Breast epithelium (tissue), 4 donors: ENCODE measurements at regions of chr1 and their contacts with region 1.

Region 1: DNA sequence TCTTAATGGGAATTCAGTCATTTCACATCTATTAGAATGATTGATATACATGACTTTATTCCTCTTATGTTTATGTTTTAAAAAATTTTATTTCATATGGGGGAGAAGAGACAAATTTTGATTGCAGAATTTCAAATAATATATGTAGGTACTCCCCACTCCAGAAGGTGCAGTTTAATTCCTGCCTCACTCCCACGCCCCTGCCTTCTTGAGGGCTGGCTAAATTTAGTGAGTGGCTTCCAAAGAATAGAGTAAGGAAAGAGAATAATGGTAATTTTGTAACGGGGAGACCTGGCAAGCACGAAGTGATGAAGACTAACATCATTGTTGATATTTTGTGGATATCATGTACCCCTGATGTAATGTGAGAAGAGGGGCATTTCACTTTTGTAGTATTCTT is 94.7 kb upstream of the FAM78B start:
- DNase-seq: no peak
- H3K4me3 ChIP-seq: no peak overlapping the region
- H3K27ac ChIP-seq: no peak overlapping the region
- H3K4me1 ChIP-seq: no peaks in the 10 kb centered on the region
- H3K27me3 ChIP-seq: no peaks in the 10 kb centered on the region
- CTCF ChIP-seq: no peak
- POLR2A ChIP-seq: no peak

Region 2: DNA sequence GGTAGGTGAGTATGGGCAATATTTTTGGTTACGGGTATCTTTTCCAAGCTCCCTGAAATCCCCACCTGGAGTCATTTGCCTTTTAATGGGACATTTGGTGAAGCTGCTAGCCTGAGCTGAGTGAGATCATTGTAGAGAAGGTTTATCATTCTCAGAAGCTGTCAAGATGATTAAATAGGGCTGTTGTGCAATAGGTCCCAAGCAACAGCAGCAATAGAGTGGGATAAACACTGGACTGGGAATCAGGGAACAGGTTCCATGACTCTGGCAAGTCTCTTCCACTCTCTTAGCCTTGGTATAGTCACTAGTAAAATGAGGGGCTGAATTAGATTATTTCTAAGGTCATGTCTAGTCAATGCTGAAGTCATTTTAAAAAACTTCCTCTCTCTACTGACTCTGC is 64.4 kb before region 1 on chr1:
- intact Hi-C with region 1: no loop called
- DNase-seq: no peak
- H3K4me3 ChIP-seq: no peak overlapping the region
- H3K27ac ChIP-seq: no peak overlapping the region
- H3K4me1 ChIP-seq: no peaks in the 10 kb centered on the region
- H3K27me3 ChIP-seq: no peaks in the 10 kb centered on the region
- CTCF ChIP-seq: no peak
- POLR2A ChIP-seq: no peak

Region 3: DNA sequence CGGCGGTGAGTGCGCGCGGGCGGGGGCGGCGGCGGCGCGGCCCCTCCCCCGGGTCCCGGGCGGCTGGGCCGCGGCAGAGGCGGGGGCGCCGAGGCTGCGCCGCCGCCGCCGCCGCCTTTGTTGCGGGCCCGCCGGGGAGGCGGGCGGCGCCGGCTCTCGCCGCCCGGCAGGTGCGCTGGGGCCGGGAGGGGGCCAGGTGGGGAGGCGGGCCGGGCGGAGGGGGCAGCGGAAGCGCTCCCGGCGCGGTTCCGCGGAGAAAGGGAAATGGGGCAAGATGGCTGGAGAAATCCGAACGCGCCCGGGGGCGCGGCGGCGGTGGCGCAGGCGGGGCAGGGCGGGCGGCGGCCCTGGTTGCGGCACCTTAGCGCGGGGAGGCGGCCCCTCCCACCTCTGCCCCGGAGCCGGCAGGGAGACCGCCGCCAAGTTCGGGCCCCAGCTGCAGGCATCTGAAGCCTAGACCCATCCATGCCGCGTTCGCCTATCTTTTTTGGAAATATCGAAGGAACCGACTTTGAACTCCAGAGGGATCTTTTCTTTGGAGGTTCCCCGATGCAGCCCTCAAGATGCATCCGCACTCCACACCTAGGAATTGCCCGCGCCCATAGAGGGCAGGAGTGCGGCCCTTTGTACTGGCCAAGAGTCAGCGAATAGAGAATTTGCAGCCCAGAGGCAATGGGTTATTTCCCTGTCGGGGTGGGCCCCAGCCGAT is 578.2 kb after region 1 on chr1:
- intact Hi-C with region 1: no loop called
- DNase-seq: peak; percentile 36 to 60
- H3K4me3 ChIP-seq: peak overlapping the region; percentile 60 to 83 (median 75)
- H3K27ac ChIP-seq: peak overlapping the region; percentile 92 to 97
- H3K4me1 ChIP-seq: peaks cover 3 to 21% of the 10 kb centered on the region in 2 donors
- H3K27me3 ChIP-seq: no peaks in the 10 kb centered on the region
- CTCF ChIP-seq: peak in 1 of 3 donors; percentile 7
- POLR2A ChIP-seq: no peak

Region 4: DNA sequence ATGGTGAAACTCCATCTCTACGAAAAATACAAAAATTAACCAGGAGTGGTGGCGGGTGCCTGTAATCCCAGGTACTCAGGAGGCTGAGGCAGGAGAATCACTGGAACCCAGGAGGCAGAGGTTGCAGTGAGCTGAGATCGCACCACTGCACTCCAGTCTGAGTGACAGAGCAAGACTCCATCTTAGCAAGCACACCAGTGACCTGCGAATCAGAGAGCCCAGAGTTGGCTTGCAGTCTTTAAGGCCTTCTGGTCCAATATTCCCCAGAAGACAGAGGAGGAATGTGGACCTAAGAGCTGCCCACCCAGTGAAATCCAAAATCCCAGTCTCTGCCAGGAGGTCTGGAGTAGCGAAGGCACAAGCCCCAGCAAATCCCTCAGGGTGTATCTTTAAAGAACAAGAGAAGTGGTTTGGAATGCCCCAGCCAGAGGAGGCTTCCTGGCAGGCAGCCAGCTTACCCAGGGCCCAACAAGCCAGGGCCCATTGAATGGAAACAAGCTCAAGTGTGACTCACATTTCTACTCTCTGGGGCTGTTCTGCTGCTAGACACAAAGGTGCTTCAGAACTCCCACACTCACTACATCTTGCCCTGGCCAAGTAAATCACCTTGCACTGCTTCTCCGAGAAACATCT is 1851.3 kb after region 1 on chr1:
- intact Hi-C with region 1: loop called (anchors 10 kb)
- DNase-seq: peak in 1 of 2 donors; percentile 86
- H3K4me3 ChIP-seq: no peak overlapping the region
- H3K27ac ChIP-seq: peak overlapping the region; percentile 30 to 35
- H3K4me1 ChIP-seq: no peaks in the 10 kb centered on the region
- H3K27me3 ChIP-seq: no peaks in the 10 kb centered on the region
- CTCF ChIP-seq: no peak
- POLR2A ChIP-seq: no peak